Aorta (tissue), 5 donors: ENCODE measurements at regions of chr3 and their contacts with region 1.

Region 1: DNA sequence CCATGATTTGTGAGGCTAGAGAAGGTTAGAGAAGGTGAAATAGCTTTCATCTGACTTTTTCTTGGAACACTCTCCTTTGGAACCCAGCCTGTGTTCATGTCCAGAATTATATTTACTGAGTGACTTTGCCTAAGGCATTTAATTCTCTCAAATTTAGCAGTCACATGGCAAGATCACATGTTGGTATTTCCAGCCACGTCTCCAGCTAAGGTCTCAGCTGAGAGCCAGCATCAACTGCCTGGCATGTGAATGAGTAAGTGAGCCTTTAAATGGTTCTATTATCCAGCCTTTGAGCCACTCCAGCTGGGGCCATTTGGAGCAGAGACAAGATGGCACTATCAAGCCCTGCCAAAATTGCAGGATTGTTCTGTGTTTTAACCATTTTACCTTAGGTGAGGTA is 130.2 kb upstream of the SGO1 start:
- DNase-seq: peak in 1 of 2 donors; percentile 62
- ATAC-seq: peak; percentile 85
- H3K4me3 ChIP-seq: no peak overlapping the region
- H3K27ac ChIP-seq: peak overlapping the region; percentile 71 to 100
- H3K4me1 ChIP-seq: peaks cover 0 to 3% of the 10 kb centered on the region in 2 donors
- H3K27me3 ChIP-seq: no peaks in the 10 kb centered on the region

Region 2: DNA sequence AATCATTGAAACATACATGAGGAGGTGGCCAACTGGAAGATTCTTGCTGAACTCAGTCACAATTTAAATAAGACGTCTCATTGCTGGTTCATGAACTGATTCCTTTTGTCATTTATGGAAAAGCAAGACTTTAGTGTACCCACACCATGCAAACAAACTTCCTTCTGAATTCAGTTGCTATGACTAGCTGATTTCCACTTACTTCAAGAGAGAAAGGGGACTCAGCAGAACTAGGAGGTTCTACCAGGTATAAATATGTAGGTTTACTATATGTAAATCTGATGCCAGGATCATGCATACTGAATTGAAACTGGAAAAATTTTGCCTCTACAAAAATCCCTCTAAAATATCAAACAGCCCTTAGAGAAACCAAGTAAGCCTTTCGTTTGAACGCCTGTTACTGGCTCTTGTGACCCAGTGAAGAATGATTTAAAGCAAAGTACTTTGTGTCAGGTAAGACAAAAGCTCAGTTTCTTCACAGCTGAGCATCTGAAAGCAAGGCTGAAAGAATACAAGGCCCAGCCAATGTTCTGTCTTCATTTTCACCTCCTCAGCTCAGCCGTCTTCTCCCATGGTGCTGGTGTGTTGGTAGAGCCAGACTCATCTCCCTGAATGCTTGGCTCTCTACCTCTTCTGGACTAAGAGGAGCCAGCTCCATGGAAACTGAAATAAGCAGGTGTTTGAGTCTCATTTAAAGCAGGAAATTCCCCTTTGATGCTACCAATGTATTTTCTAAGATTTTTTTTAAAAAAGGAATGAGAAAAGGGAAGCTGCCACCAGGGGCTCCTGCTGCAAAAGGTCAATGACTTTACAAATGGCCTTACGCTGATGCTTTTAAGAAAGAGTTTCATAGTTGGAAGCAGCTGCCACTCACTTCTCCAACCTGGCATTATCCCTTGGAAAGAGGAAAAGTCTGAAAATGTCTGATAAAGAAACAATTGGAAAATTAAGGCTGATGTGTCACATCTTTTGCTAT is 683.9 kb before region 1 on chr3:
- intact Hi-C with region 1: no loop called
- DNase-seq: no peak
- ATAC-seq: no peak
- H3K4me3 ChIP-seq: no peak overlapping the region
- H3K27ac ChIP-seq: no peak overlapping the region
- H3K4me1 ChIP-seq: no peaks in the 10 kb centered on the region
- H3K27me3 ChIP-seq: no peaks in the 10 kb centered on the region

Region 3: GRCh38 chr3:20256144-20256543 is 60.1 kb before region 1 on chr3:
- intact Hi-C with region 1: loop called in 1 of 2 experiments (anchors 5 kb)
- DNase-seq: no peak
- ATAC-seq: peak; percentile 56
- H3K4me3 ChIP-seq: no peak overlapping the region
- H3K27ac ChIP-seq: no peak overlapping the region
- H3K4me1 ChIP-seq: no peaks in the 10 kb centered on the region
- H3K27me3 ChIP-seq: no peaks in the 10 kb centered on the region